ENCODE measurements at regions of chr16 and their contacts with region 1.

Region 1: GRCh38 chr16:22098405-22099255 is 6.3 kb downstream of the VWA3A start:
- DNase-seq: peak; percentile 71
- CTCF ChIP-seq: peak; percentile 61

Region 2: DNA sequence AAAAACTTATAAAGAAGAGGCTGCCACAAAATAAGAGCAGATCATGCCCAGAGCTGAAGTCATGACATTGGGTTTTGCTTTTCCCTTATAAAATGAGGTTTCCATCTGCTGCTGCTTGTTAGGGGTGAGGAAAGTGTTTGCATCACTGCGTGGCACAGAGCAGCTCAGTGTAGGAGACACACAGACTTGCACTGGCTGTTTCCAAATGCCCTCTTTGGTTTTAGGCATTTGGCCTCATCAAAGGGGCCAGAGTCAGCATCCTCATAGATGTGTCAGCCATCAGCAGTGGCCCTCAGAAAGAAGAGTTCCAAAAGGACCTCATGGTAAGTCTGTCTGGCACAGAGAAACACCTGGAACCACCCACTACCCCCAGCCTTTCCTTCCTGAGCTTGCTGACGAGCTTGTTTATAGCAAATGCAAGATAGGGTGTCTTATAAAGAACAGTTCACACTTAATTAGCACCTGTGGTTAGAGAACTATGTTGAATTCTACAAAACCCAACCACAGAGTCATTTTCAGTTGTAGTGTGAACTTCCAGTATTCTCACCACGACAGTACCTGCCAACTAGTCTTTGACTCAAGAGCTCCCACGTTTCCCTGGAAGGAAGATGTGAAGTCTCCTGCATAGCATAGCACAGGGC is 10.7 kb after region 1 on chr16:
- CTCF ChIA-PET with region 1: interaction called, 14 read pairs
- POLR2A ChIA-PET with region 1: no interaction called
- DNase-seq: no peak
- CTCF ChIP-seq: no peak

Region 3: GRCh38 chr16:22117609-22118008 is 19.0 kb after region 1 on chr16:
- CTCF ChIA-PET with region 1: interaction called, 10 read pairs
- POLR2A ChIA-PET with region 1: no interaction called
- DNase-seq: no peak
- CTCF ChIP-seq: no peak

Measured in GM10248 (cell line).